GM12878 (cell line): ENCODE measurements at regions of chr19 and their contacts with region 1.

Region 1: DNA sequence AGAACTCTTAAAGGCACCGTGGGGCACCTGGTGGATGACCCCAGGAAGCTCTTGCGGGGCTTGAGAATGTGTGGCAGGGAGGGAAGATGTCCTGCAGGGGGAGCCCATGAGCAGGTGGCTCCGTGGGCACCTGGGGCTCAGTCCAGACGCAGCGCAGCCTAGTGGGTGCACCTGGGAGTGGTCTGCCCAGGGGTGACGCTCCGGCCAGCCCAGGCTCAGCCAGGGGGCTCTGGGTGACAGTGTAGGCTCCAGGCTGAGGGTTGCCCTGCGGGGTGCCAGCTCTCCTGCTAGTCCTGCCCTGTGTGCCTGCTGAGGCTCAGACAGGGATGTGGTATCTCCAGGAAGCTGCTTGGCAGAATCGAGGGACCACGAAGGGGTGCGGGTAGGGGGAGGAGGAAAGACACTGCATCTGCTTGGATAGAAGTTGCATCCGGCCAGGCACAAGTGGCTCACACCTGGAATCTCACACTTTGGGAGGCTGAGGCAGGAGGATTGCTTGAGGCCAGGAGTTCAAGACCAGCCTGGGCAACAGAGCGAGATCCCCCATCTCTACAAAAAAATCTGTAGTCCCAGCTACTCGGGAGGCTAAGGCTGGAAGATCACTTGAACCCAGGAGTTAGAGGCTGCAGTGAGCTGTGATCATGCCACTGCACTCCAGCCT is 15.0 kb upstream of the PGLS start:
- DNase-seq: peak; percentile 63
- ATAC-seq: peak; percentile 100
- H3K4me3 ChIP-seq: no peak overlapping the region
- H3K27ac ChIP-seq: no peak overlapping the region
- H3K4me1 ChIP-seq: peaks cover 13% of the 10 kb centered on the region
- H3K27me3 ChIP-seq: no peaks in the 10 kb centered on the region
- CTCF ChIP-seq: peak; percentile 98 to 100 (median 99)
- EP300 ChIP-seq: no peak
- POLR2A ChIP-seq: no peak
- RAD21 ChIP-seq: peak; percentile 60

Region 2: DNA sequence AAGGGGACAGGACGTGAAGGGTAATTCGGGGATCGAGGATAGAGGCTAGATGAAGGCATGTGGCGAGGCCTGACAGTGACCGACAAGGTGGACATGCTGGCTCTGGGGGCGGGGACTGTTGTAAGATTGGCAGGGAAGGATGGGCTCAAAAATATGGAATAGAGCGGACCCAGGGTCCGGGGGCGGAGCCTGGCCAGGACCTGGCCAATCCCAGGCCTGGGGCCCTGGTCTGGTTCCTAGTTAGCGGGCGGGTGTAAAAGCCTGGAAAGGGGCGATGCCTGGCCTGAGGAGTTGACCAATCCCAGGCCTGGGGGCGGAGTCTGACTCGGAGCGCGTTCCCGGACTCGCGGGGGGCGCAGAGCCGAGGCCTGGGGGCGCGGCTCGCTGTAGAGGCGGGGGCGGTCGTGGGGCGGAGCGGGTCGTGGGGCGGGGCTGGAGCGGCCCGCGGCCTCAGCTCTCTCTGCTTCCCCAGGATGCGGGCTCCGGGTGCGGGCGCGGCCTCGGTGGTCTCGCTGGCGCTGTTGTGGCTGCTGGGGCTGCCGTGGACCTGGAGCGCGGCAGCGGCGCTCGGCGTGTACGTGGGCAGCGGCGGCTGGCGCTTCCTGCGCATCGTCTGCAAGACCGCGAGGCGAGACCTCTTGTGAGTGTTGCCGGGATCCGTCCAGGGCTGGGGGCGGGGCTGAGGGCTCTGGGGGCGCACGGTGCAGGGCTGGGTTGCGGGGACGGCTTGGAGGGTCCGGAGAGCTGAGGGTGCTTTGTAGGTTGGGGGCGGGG is 26.2 kb before region 1 on chr19 and contains the start of gene SLC27A1:
- CTCF ChIA-PET with region 1: interaction called, 11 read pairs
- POLR2A ChIA-PET with region 1: no interaction called
- RAD21 ChIA-PET with region 1: no interaction called
- SMC1A ChIA-PET with region 1: interaction called, 5 read pairs
- in situ Hi-C with region 1: no loop called
- intact Hi-C with region 1: no loop called
- DNase-seq: peak; percentile 86
- ATAC-seq: peak; percentile 94
- H3K4me3 ChIP-seq: peak within 1 kb of the TSS; percentile 80
- H3K27ac ChIP-seq: peak within 1 kb of the TSS; percentile 61
- H3K4me1 ChIP-seq: peaks cover 22% of the 10 kb centered on the region
- H3K27me3 ChIP-seq: no peaks in the 10 kb centered on the region
- CTCF ChIP-seq: no peak
- EP300 ChIP-seq: no peak
- POLR2A ChIP-seq: peak; percentile 73
- RAD21 ChIP-seq: no peak
- polyA plus RNA-seq, gene SLC27A1: 0.11 to 0.31 TPM

Region 3: DNA sequence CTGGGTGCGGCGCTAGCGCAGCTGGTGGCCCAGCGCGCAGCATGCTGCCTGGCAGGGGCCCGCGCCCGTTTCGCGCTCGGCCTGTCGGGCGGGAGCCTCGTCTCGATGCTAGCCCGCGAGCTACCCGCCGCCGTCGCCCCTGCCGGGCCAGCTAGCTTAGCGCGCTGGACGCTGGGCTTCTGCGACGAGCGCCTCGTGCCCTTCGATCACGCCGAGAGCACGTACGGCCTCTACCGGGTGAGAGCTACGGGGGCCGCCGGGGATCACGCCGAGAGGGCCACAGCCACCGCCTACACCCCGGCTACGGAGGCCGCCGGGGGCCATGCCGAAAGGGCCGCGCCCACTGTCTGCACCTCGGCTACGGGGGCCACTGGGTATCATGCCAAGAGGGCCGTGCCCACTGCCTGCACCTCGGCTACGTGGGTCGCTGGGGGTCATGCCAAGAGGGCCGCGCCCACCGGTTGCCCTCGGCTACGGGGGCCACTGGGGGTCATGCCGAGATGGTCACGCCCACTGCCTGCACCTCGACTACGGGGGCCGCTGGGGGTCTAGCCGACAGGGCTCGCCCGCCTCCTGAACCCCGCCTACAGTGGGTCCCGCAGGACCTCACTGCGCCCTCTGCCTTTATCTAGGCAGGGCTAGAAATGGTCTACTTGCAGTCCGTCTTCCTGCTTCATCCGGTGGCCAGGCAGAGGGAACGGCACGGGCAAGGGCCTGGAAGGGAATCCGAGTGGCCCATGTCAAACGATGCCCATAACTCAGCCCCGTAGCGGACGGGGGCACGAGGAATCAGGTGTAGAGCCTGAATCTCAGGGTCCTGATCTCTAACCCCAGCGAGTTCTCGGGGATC is 15.5 kb after region 1 on chr19:
- CTCF ChIA-PET with region 1: interaction called, 27 read pairs
- POLR2A ChIA-PET with region 1: interaction called, 6 read pairs
- RAD21 ChIA-PET with region 1: interaction called, 3 read pairs
- SMC1A ChIA-PET with region 1: interaction called, 9 read pairs
- in situ Hi-C with region 1: no loop called
- intact Hi-C with region 1: no loop called
- DNase-seq: peak; percentile 77
- ATAC-seq: peak; percentile 88
- H3K4me3 ChIP-seq: peak overlapping the region; percentile 88
- H3K27ac ChIP-seq: peak overlapping the region; percentile 97
- H3K4me1 ChIP-seq: peaks cover 8% of the 10 kb centered on the region
- H3K27me3 ChIP-seq: no peaks in the 10 kb centered on the region
- CTCF ChIP-seq: peak; percentile 30 to 57 (median 37); a peak in 5 of 6 replicates
- EP300 ChIP-seq: peak; percentile 46 to 64; a peak in 1 of 4 replicates
- POLR2A ChIP-seq: peak; percentile 87
- RAD21 ChIP-seq: peak; percentile 22; the same call in 1 of the 2 replicates

Region 4: GRCh38 chr19:17530586-17530985 is 34.1 kb after region 1 on chr19:
- CTCF ChIA-PET with region 1: interaction called, 14 read pairs
- POLR2A ChIA-PET with region 1: no interaction called
- RAD21 ChIA-PET with region 1: interaction called, 3 read pairs
- SMC1A ChIA-PET with region 1: interaction called, 5 read pairs
- in situ Hi-C with region 1: no loop called
- intact Hi-C with region 1: no loop called
- DNase-seq: no peak
- ATAC-seq: no peak
- H3K4me3 ChIP-seq: no peak overlapping the region
- H3K27ac ChIP-seq: no peak overlapping the region
- H3K4me1 ChIP-seq: peaks cover 41% of the 10 kb centered on the region
- H3K27me3 ChIP-seq: no peaks in the 10 kb centered on the region
- CTCF ChIP-seq: no peak
- EP300 ChIP-seq: no peak
- POLR2A ChIP-seq: no peak
- RAD21 ChIP-seq: no peak

Region 5: GRCh38 chr19:17570791-17571190 is 74.3 kb after region 1 on chr19:
- CTCF ChIA-PET with region 1: interaction called, 114 read pairs
- POLR2A ChIA-PET with region 1: interaction called, 6 read pairs
- RAD21 ChIA-PET with region 1: interaction called, 21 read pairs
- SMC1A ChIA-PET with region 1: interaction called, 11 read pairs
- in situ Hi-C with region 1: no loop called
- intact Hi-C with region 1: loop called (anchors 5 kb)
- DNase-seq: no peak
- ATAC-seq: no peak
- H3K4me3 ChIP-seq: no peak overlapping the region
- H3K27ac ChIP-seq: no peak overlapping the region
- H3K4me1 ChIP-seq: no peaks in the 10 kb centered on the region
- H3K27me3 ChIP-seq: no peaks in the 10 kb centered on the region
- CTCF ChIP-seq: no peak
- EP300 ChIP-seq: no peak
- POLR2A ChIP-seq: no peak
- RAD21 ChIP-seq: no peak

Region 6: GRCh38 chr19:17616961-17617806 is 120.7 kb after region 1 on chr19:
- CTCF ChIA-PET with region 1: interaction called, 27 read pairs
- POLR2A ChIA-PET with region 1: interaction called, 5 read pairs
- RAD21 ChIA-PET with region 1: interaction called, 7 read pairs
- SMC1A ChIA-PET with region 1: interaction called, 6 read pairs
- in situ Hi-C with region 1: no loop called
- intact Hi-C with region 1: loop called (anchors 1 kb)
- DNase-seq: no peak
- ATAC-seq: peak; percentile 32; the same call in 2 of the 3 replicates
- H3K4me3 ChIP-seq: peak overlapping the region; percentile 13; the same call in 1 of the 2 replicates
- H3K27ac ChIP-seq: no peak overlapping the region
- H3K4me1 ChIP-seq: no peaks in the 10 kb centered on the region
- H3K27me3 ChIP-seq: no peaks in the 10 kb centered on the region
- CTCF ChIP-seq: no peak
- EP300 ChIP-seq: no peak
- POLR2A ChIP-seq: no peak
- RAD21 ChIP-seq: no peak